Aorta (tissue), 5 donors: ENCODE measurements at regions of chr11 and their contacts with region 1.

Region 1: GRCh38 chr11:4636962-4637661 is at the start of gene OR51D1:
- DNase-seq: peak; percentile 65 to 87
- ATAC-seq: peak; percentile 92
- H3K4me3 ChIP-seq: no peak within 1 kb of the TSS
- H3K27ac ChIP-seq: no peak within 1 kb of the TSS
- H3K4me1 ChIP-seq: no peaks in the 10 kb centered on the region
- H3K27me3 ChIP-seq: no peaks in the 10 kb centered on the region
- total RNA-seq, gene OR51D1: not detected

Region 2: DNA sequence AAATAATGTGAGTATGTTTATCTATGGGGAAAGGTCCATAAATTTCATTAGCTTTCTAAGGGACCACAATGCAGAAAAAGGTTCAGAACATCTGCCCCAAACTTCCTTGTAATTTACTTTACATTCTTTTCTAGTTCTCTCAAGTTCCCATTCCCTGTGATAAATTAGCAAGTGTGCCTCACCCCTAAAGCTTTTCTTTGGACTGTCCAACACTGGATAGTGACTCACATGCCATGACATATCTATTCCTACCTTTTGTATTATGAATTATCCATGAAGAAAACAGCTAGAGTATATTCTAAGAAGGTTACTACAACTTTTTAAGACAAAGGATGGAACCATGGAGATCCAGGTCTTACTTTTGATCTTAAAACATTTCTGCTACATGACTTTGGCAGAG is 131.0 kb after region 1 on chr11:
- intact Hi-C with region 1: no loop called
- DNase-seq: no peak
- ATAC-seq: no peak
- H3K4me3 ChIP-seq: no peak overlapping the region
- H3K27ac ChIP-seq: no peak overlapping the region
- H3K4me1 ChIP-seq: no peaks in the 10 kb centered on the region
- H3K27me3 ChIP-seq: no peaks in the 10 kb centered on the region

Region 3: DNA sequence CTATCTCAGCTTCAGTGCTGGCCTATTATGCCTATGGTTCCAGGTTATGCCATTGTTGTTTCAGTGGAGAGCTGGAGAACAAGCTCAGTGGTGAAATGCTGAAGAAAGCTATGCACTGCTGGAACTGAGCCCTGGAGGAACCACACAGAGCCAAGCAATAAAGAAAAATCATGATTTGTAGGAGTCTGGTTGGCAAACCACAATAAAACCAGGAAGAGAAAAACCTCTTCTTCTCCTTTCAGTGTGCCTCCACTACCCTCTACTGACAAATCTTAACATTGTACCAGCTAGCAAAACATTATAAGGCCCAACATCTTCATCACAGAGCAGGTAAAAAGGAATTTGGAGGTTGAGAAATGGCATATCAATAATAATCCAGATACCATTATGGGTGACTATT is 189.3 kb after region 1 on chr11:
- intact Hi-C with region 1: loop called in 1 of 2 experiments (anchors 5 kb)
- DNase-seq: no peak
- ATAC-seq: no peak
- H3K4me3 ChIP-seq: no peak overlapping the region
- H3K27ac ChIP-seq: no peak overlapping the region
- H3K4me1 ChIP-seq: no peaks in the 10 kb centered on the region
- H3K27me3 ChIP-seq: no peaks in the 10 kb centered on the region

Region 4: DNA sequence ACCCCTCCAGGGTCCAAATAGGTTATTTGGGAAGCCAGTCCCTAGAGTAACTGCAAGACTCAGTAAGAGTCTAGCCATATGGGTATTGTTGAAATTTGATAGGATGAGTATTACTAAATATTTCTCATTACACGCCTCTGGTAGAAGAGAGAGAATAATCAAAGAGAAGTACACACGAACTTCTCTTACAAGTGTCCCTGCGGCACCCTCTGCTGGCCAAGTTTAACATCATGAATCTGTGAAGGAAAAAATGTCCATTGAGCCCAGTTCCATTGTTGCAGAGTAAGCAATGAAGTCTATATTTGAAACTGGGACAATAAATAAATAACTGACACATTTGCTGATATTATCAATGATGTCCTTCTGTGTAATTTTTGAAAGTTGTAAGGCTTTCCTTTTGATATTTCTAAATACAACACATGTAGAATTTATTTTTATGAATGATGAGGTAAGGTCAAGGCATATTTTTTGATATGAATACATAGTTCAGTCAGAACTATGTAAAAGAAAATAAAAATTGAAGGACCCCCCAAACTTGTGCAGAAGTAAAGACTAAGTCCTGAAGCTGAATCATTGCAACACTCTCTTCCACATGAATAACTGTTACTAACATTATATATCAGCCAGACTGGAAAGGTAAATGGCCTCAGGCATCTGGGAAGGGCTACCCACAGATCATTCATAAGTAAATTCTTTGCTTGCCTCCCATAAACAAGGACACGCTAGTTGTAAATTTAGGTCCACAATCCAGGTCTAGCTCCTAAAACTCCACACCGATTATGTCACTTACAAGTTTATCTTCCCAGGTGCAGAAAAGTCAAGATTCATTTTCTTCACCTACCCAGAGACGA is 367.5 kb after region 1 on chr11:
- intact Hi-C with region 1: loop called (anchors 10 kb)
- DNase-seq: no peak
- ATAC-seq: no peak
- H3K4me3 ChIP-seq: no peak overlapping the region
- H3K27ac ChIP-seq: no peak overlapping the region
- H3K4me1 ChIP-seq: no peaks in the 10 kb centered on the region
- H3K27me3 ChIP-seq: no peaks in the 10 kb centered on the region